ENCODE measurements at regions of chr14 and their contacts with region 1.

Region 1: DNA sequence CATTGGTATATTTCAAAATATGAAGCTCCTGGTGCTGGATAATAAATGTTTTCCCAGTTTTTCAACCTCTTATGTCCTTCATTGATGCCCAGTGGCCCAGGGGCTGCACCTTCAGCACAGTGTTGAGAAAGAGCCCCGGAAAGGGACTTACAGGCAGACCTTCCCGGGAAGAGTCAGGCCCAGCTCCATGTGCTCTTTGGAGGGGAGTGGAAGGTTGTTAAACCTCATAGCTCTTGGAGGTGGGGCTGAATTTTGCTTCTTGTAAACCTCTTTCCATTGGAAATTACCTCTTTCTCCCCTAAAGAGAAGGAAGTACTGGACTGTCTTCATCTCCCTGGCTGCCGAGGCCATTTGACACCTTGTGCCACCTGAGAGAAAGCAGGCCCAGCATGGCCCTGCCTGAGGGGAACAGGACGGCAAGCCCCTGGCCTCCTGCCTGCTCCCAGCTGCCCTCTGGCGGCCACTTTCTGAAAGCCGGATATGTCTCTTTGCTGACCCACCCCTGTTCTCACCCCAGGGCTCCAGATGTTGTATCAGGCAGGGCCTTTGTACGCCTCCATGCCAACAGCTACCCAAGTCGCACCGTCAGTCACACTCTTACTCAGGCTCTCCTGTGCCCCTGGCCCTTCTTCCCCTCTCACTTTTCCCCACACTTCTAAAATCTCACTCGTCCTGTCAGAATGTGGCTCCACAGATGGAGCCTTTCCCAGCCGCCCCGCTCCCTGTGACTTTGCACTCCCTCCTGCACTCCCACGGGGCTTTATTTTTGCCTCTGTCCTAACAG is 43.0 kb downstream of the EVL start:
- DNase-seq: peak; percentile 77 to 86
- H3K4me3 ChIP-seq: no peak overlapping the region
- H3K4me3 Mint-ChIP-seq: no peak overlapping the region
- H3K27ac Mint-ChIP-seq: no peak overlapping the region
- H3K4me1 ChIP-seq: no peaks in the 10 kb centered on the region
- H3K4me1 Mint-ChIP-seq: peaks cover 11% of the 10 kb centered on the region
- H3K27me3 ChIP-seq: no peaks in the 10 kb centered on the region
- H3K27me3 Mint-ChIP-seq: no peaks in the 10 kb centered on the region
- CTCF ChIP-seq: peak; percentile 82 to 89

Region 2: DNA sequence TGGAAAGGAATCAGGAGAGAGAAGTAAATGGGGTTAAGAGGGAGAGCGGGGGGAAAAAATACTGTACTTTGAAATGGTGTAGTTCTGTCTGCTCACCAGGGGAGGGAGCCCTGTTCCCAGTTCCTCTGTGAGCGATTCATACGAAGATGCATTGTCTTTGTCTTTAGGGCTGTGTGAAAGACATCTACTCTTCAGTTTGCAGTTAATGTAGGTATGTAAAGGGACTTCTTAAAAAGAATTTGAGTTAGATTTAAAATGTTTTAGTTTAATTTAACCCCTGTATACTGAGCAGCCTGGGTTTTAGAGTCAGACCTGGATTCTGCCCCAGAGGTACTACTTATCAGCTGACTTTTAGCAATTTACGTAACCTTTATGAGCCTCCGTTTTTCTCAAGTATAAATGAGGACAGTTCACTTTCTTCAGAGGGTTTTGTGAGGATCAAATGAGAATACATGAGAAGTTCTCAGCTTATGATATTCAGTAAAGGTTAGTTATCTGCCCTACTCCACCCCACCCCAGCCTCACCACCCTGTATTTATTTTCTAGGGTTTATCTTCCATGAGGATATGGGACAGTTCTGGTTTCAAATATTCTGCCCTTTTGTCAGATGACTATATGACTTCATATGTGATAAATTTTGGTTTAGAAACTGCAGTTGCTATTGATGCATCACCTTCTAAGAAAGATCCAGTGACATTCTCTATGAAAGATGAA is 125.5 kb before region 1 on chr14:
- CTCF ChIA-PET with region 1: no interaction called
- POLR2A ChIA-PET with region 1: no interaction called
- intact Hi-C with region 1: loop called (anchors 1 kb)
- DNase-seq: peak in 1 of 2 experiments; percentile 67
- H3K4me3 ChIP-seq: no peak overlapping the region
- H3K4me3 Mint-ChIP-seq: no peak overlapping the region
- H3K27ac Mint-ChIP-seq: no peak overlapping the region
- H3K4me1 ChIP-seq: no peaks in the 10 kb centered on the region
- H3K4me1 Mint-ChIP-seq: peaks cover 7% of the 10 kb centered on the region
- H3K27me3 ChIP-seq: no peaks in the 10 kb centered on the region
- H3K27me3 Mint-ChIP-seq: no peaks in the 10 kb centered on the region
- CTCF ChIP-seq: peak; percentile 82 to 89

Region 3: GRCh38 chr14:99995700-99996356 is 112.4 kb before region 1 on chr14:
- CTCF ChIA-PET with region 1: no interaction called
- POLR2A ChIA-PET with region 1: no interaction called
- intact Hi-C with region 1: no loop called
- DNase-seq: peak; percentile 56 to 65
- H3K4me3 ChIP-seq: no peak overlapping the region
- H3K4me3 Mint-ChIP-seq: no peak overlapping the region
- H3K27ac Mint-ChIP-seq: no peak overlapping the region
- H3K4me1 ChIP-seq: no peaks in the 10 kb centered on the region
- H3K4me1 Mint-ChIP-seq: no peaks in the 10 kb centered on the region
- H3K27me3 ChIP-seq: no peaks in the 10 kb centered on the region
- H3K27me3 Mint-ChIP-seq: peaks cover 6% of the 10 kb centered on the region
- CTCF ChIP-seq: peak; percentile 76

Region 4: DNA sequence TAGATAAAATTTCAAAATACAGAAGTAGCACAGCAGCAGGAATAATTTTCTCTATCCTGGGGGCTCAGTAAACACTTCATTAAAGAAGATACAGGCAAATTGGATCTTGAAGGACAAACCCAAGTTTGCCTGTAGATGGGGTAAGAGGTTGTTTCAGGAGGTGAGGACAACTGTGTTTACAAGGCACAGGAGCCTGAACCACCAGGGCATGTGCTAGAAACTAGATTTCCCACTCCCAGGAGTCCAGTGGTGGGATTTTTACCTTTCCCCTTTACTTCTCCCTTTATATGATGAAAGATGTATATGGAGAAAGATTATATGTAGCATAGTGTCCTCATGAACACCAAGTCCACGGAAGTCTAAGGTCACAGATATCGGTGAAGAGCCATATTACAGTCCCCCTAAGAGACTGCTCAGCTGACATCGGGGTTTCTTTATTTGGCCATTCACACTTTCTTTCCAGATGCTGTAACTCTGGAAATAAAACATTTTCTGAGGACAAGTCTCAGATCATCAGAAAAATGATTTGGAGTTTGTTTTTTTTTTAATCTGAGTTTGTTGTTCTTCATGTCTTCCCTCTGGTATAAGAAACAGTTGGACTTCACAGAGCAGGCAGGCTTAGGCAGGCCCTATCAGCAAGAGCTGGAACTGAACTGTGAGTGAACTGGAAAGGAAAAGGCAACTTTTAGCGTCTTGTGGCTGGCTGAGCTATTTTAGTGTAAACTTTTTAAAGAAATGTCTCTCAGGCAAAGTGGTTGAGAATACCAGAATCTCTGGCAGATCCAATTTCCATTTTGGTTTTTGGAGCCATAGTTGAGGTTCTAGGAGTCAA is 51.1 kb before region 1 on chr14:
- CTCF ChIA-PET with region 1: no interaction called
- POLR2A ChIA-PET with region 1: no interaction called
- intact Hi-C with region 1: loop called (anchors 1 kb)
- DNase-seq: peak in 1 of 2 experiments; percentile 15
- H3K4me3 ChIP-seq: no peak overlapping the region
- H3K4me3 Mint-ChIP-seq: no peak overlapping the region
- H3K27ac Mint-ChIP-seq: no peak overlapping the region
- H3K4me1 ChIP-seq: no peaks in the 10 kb centered on the region
- H3K4me1 Mint-ChIP-seq: no peaks in the 10 kb centered on the region
- H3K27me3 ChIP-seq: no peaks in the 10 kb centered on the region
- H3K27me3 Mint-ChIP-seq: peaks cover 2% of the 10 kb centered on the region
- CTCF ChIP-seq: peak; percentile 21 to 34

Region 5: GRCh38 chr14:100076133-100076532 is 32.1 kb before region 1 on chr14:
- CTCF ChIA-PET with region 1: interaction called, 3 read pairs
- POLR2A ChIA-PET with region 1: no interaction called
- intact Hi-C with region 1: loop called (anchors 1 kb)
- DNase-seq: peak; percentile 31 to 41
- H3K4me3 ChIP-seq: no peak overlapping the region
- H3K4me3 Mint-ChIP-seq: no peak overlapping the region
- H3K27ac Mint-ChIP-seq: no peak overlapping the region
- H3K4me1 ChIP-seq: no peaks in the 10 kb centered on the region
- H3K4me1 Mint-ChIP-seq: no peaks in the 10 kb centered on the region
- H3K27me3 ChIP-seq: no peaks in the 10 kb centered on the region
- H3K27me3 Mint-ChIP-seq: no peaks in the 10 kb centered on the region
- CTCF ChIP-seq: peak; percentile 22 to 29